Activated naive CD4-positive, alpha-beta T cell treated with anti-CD3 and anti-CD28 coated beads for 36 hours (primary cell): ENCODE measurements at regions of chr19 and their contacts with region 1.

Region 1: DNA sequence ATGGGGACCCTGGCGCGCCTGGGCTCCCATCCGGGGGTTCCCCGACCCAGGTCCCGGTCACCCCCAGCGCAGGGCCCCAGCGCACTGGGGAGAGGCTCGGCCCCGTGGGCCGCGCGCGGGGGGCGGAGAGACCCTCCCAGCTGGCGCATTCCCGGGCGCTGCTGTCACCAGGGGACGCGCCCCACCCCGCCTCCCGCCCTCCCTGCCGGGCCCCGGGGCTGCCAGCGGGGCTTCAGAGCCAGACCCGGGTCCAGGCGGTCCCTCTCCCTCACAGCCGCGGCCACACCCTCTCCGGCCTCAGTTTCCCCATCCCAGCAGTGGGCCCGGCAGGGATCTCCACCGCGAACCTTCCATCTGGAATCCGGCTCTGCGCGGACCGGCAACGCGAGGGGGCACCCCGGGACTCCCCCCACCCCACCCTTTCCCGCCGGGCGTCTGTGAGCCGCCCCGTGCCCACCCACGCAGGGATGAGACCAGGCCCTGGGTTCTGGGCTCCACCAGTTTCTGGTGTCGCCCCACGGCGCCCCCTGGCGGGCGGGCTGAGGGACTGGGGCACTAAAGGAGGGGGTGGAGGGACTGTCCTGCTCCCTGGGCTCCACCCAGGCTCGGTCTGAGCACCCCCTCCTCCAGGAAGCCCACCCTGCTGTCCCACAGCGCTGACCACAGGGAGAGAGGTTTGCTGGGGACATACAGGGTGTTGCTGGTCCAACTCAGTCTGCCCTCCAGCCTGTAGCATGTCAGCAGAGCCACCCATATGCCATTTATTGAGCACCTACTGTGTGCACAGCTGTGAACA is 878 bp upstream of the ADAMTSL5 start:
- DNase-seq: peak; percentile 69
- H3K4me3 Mint-ChIP-seq: no peak overlapping the region
- H3K27ac Mint-ChIP-seq: no peak overlapping the region
- H3K4me1 Mint-ChIP-seq: peaks cover 12% of the 10 kb centered on the region
- H3K27me3 Mint-ChIP-seq: peaks cover 6% of the 10 kb centered on the region

Region 2: GRCh38 chr19:1438035-1438932 is 75.4 kb before region 1 on chr19 and contains the start of gene RPS15:
- CTCF ChIA-PET with region 1: no interaction called
- intact Hi-C with region 1: loop called (anchors 1 kb)
- DNase-seq: peak; percentile 96
- H3K4me3 Mint-ChIP-seq: peak within 1 kb of the TSS; percentile 98
- H3K27ac Mint-ChIP-seq: peak within 1 kb of the TSS; percentile 99
- H3K4me1 Mint-ChIP-seq: peaks cover 40% of the 10 kb centered on the region
- H3K27me3 Mint-ChIP-seq: no peaks in the 10 kb centered on the region
- total RNA-seq, gene RPS15: 1,902 to 1,906 TPM

Region 3: DNA sequence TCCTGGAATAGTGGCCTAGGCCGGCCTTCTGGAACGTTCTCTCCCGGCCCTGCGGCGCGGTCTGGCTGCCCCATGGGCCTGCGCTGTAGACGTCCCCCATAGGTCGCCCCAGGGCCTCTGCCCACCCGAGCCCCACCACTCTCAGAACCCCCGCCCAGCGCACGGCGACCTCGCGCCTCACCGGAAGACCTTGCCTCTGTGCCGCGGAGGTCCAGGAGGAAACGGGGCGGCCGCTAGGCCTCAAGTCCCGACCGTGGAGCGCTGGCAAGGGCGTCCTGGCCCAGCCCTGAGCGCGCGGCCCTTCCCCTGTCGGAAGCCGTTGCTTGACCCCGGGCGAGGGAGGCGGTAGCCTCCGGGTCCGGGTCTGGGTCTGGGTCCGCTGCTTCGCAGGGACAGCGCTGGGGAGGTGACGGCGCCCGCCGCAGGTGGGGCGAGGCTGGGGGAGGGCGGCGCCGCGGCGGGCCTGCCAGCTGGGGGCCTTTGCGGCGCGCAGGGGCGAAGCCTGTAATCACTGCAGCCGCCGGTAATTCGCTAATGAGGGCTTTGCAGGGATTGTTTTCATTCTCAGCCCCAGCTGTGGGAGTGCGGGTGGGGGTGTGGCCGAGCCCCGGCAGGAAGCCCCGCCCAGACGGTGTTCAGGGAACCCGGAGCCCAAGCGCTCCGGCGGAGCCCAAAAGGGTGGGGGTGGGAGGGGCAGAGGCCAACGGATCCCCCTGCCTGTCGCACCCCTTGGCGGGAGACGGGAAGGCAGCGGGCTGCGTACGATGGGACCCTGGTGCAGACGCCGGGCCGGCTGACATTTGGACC is 43.3 kb before region 1 on chr19:
- CTCF ChIA-PET with region 1: interaction called, 3 read pairs
- intact Hi-C with region 1: loop called (anchors 2 kb)
- DNase-seq: peak; percentile 76
- H3K4me3 Mint-ChIP-seq: peak overlapping the region; percentile 51
- H3K27ac Mint-ChIP-seq: no peak overlapping the region
- H3K4me1 Mint-ChIP-seq: peaks cover 17% of the 10 kb centered on the region
- H3K27me3 Mint-ChIP-seq: peaks cover 17% of the 10 kb centered on the region